ENCODE measurements at regions of chr1 and their contacts with region 1.

Region 1: DNA sequence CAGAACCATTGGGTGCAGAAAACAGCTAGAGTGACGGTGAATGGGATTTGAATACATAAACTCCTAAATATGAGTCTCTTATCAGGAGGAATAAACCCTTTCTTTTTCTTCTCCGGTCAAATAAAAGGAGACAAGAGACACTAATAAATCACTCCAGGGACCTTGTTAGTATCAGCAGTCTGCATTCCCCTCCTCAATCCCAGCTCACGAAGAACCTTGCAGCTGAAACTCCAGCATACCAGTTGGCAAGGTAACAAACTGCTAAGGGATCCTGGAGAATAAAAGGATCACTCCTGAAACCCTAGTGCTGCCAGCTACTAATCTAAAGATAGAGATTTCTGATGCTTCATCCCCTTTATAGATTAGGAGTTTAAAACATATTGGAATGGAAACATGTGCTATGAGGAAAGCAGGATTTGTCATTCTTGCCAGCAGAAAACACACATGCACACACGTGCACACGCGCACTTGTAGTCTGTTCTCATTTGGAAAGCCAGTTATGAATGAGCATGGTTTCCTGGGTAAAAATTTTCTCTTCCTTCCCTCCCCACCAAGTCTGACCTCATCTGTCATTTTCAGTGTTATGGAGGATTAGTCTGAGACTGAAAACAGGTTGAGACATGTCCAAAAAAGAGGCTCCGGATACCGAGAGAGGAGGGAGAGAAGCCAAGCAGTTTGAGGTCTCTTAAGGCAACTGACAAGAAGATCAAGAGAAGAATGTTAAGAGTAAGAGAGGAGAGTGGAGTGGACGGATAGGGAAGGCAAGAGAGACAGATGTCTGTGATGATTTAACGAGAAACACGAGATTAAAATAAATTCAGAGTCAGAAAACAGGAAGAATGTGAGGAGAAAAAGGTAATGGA is 10.9 kb downstream of the IER5 start:
- DNase-seq: no peak
- ATAC-seq: peak; percentile 15 to 53 (median 40)
- H3K4me3 ChIP-seq: no peak overlapping the region
- H3K4me3 Mint-ChIP-seq: no peak overlapping the region
- H3K27ac ChIP-seq: no peak overlapping the region
- H3K27ac Mint-ChIP-seq: peak overlapping the region; percentile 70 to 84
- H3K4me1 ChIP-seq: peaks cover 24 to 30% of the 10 kb centered on the region in 2 experiments
- H3K4me1 Mint-ChIP-seq: peaks cover 54 to 74% (median 63%) of the 10 kb centered on the region in 3 donors
- H3K27me3 ChIP-seq: no peaks in the 10 kb centered on the region
- H3K27me3 Mint-ChIP-seq: no peaks in the 10 kb centered on the region

Region 2: DNA sequence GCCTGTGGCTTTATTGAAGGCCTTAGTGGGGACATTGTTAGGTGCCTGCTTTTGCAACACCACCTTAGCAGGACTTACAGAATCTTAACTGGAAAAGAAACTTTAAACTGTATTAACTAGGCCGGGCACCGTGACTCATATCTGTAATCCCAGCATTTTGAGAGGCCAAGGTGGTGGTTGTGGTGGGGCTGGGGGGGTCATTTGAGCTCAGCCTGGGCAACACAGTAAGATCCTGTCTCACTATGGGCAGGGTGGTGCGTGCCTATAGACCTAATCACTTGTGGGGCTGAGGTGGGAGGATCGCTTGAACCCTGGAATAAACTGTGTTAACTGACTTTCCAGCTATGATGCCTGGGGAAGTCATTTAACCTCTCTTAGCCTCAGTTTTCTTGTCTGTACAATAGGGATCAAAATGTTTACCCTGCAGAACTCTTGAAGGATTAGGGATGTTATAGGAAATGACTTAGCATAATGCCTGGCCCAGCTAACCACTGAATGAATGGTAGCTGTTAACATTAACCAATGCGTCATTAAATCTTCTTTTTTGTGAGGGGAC is 28.6 kb after region 1 on chr1:
- CTCF ChIA-PET with region 1: no interaction called
- POLR2A ChIA-PET with region 1: interaction called in 1 of 2 experiments, 13 read pairs
- DNase-seq: no peak
- ATAC-seq: no peak
- H3K4me3 ChIP-seq: no peak overlapping the region
- H3K4me3 Mint-ChIP-seq: no peak overlapping the region
- H3K27ac ChIP-seq: no peak overlapping the region
- H3K27ac Mint-ChIP-seq: no peak overlapping the region
- H3K4me1 ChIP-seq: peaks cover 0 to 2% of the 10 kb centered on the region in 2 experiments
- H3K4me1 Mint-ChIP-seq: peaks cover 5 to 22% (median 13%) of the 10 kb centered on the region in 3 donors
- H3K27me3 ChIP-seq: peaks cover 0 to 12% of the 10 kb centered on the region in 2 experiments
- H3K27me3 Mint-ChIP-seq: peaks cover 3 to 6% of the 10 kb centered on the region in 2 donors

Region 3: GRCh38 chr1:181179987-181180365 is 80.6 kb after region 1 on chr1:
- CTCF ChIA-PET with region 1: no interaction called
- POLR2A ChIA-PET with region 1: no interaction called
- DNase-seq: peak in 31 of 35 experiments; percentile 9 to 72 (median 36)
- ATAC-seq: peak; percentile 49 to 91 (median 69)
- H3K4me3 ChIP-seq: no peak overlapping the region
- H3K4me3 Mint-ChIP-seq: peak overlapping the region in 1 of 3 donors; percentile 60
- H3K27ac ChIP-seq: no peak overlapping the region
- H3K27ac Mint-ChIP-seq: peak overlapping the region; percentile 42 to 48
- H3K4me1 ChIP-seq: peaks cover 13% of the 10 kb centered on the region in 2 experiments
- H3K4me1 Mint-ChIP-seq: peaks cover 13 to 16% (median 15%) of the 10 kb centered on the region in 3 donors
- H3K27me3 ChIP-seq: peaks cover 2 to 19% of the 10 kb centered on the region in 2 experiments
- H3K27me3 Mint-ChIP-seq: peaks cover 3 to 18% of the 10 kb centered on the region in 2 donors

Region 4: GRCh38 chr1:181789395-181789794 is 690.0 kb after region 1 on chr1:
- CTCF ChIA-PET with region 1: no interaction called
- POLR2A ChIA-PET with region 1: no interaction called
- DNase-seq: no peak
- ATAC-seq: no peak
- H3K4me3 ChIP-seq: no peak overlapping the region
- H3K4me3 Mint-ChIP-seq: no peak overlapping the region
- H3K27ac ChIP-seq: no peak overlapping the region
- H3K27ac Mint-ChIP-seq: no peak overlapping the region
- H3K4me1 ChIP-seq: no peaks in the 10 kb centered on the region
- H3K4me1 Mint-ChIP-seq: no peaks in the 10 kb centered on the region
- H3K27me3 ChIP-seq: no peaks in the 10 kb centered on the region
- H3K27me3 Mint-ChIP-seq: peaks cover 11 to 31% of the 10 kb centered on the region in 2 donors

Region 5: DNA sequence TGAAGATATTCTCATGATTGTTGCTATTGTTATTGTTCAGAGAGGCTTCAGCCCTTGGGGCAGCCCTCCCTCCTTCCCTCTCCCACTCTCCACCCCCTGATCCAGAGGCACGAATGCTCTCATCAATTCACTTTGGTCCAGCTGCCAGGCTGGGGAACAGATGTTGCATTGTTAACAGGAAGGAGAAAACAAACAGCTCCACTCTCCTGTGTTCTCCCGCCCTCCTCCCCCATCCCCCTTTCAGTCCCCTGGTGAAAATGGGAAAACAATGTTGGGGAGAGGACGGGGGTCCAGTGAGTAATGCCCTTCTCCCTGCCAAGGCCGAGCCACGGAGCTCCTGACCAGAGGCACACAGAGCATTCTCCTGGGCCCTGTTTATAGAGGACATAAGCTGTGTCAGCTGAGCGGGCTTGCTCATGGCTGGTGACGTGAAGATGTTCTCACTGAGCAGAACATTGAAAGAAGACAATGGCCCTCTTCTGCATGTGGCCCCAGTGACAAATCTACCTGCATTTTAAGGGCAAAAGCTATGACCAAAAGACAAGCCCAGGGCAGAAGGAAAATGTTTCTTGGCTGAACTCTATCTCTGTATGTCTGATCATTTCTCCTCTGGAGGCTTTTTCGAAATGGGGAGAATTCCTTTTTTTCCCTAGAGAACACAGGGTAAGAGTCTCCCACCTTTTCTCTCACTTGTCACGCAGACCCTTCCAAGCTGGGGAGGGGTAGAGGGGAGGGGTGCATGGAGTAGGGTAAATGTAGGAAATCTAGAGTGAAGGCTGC is 1180.5 kb after region 1 on chr1:
- CTCF ChIA-PET with region 1: no interaction called
- POLR2A ChIA-PET with region 1: no interaction called
- DNase-seq: no peak
- ATAC-seq: no peak
- H3K4me3 ChIP-seq: no peak overlapping the region
- H3K4me3 Mint-ChIP-seq: no peak overlapping the region
- H3K27ac ChIP-seq: no peak overlapping the region
- H3K27ac Mint-ChIP-seq: no peak overlapping the region
- H3K4me1 ChIP-seq: no peaks in the 10 kb centered on the region
- H3K4me1 Mint-ChIP-seq: peaks cover 3 to 7% (median 5%) of the 10 kb centered on the region in 3 donors
- H3K27me3 ChIP-seq: no peaks in the 10 kb centered on the region
- H3K27me3 Mint-ChIP-seq: peaks cover 2 to 8% of the 10 kb centered on the region in 2 donors

Region 6: DNA sequence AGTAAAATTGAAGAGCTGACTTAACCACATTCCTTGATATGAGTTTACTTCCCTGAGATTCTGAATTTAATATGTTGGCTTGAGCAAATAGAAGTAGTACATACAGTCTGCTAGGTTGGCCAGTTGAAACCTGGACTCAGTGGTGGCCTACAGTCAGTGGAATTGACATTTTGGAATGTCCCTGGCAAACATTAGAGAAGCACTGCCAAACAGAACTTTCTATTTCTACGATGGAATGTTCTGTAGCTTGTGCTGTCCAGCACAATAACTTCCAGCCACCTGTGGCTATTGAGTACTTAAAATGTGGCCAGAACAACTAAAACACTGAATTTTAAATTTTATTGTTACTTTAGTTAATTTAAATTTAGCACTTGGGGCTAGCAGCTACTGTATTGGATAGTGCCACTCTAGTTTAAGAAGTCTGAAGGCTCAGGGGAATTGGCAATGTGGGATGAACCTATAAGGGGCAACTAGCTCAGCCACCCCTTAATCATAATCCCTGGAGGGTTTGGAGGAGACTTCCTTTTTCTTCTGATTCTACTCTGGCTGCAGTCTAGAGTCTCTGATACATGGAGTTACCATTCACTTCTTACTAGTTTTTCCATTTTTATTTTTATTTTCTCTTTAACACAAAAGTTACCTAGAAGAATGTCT is 1311.4 kb after region 1 on chr1:
- CTCF ChIA-PET with region 1: interaction called in 1 of 2 experiments, 11 read pairs
- POLR2A ChIA-PET with region 1: no interaction called
- DNase-seq: no peak
- ATAC-seq: no peak
- H3K4me3 ChIP-seq: no peak overlapping the region
- H3K4me3 Mint-ChIP-seq: no peak overlapping the region
- H3K27ac ChIP-seq: no peak overlapping the region
- H3K27ac Mint-ChIP-seq: no peak overlapping the region
- H3K4me1 ChIP-seq: no peaks in the 10 kb centered on the region
- H3K4me1 Mint-ChIP-seq: no peaks in the 10 kb centered on the region
- H3K27me3 ChIP-seq: peaks cover 0 to 13% of the 10 kb centered on the region in 2 experiments
- H3K27me3 Mint-ChIP-seq: peaks cover 38 to 40% of the 10 kb centered on the region in 2 donors

Measured in T-cell (primary cell).